ENCODE measurements at regions of chr7 and their contacts with region 1.

Region 1: GRCh38 chr7:122935620-122936019 is 49.4 kb upstream of the CADPS2 start:
- DNase-seq: no peak
- ATAC-seq: no peak
- H3K4me3 Mint-ChIP-seq: no peak overlapping the region
- H3K27ac Mint-ChIP-seq: no peak overlapping the region
- H3K4me1 Mint-ChIP-seq: no peaks in the 10 kb centered on the region
- H3K27me3 Mint-ChIP-seq: no peaks in the 10 kb centered on the region
- CTCF ChIP-seq: no peak

Region 2: DNA sequence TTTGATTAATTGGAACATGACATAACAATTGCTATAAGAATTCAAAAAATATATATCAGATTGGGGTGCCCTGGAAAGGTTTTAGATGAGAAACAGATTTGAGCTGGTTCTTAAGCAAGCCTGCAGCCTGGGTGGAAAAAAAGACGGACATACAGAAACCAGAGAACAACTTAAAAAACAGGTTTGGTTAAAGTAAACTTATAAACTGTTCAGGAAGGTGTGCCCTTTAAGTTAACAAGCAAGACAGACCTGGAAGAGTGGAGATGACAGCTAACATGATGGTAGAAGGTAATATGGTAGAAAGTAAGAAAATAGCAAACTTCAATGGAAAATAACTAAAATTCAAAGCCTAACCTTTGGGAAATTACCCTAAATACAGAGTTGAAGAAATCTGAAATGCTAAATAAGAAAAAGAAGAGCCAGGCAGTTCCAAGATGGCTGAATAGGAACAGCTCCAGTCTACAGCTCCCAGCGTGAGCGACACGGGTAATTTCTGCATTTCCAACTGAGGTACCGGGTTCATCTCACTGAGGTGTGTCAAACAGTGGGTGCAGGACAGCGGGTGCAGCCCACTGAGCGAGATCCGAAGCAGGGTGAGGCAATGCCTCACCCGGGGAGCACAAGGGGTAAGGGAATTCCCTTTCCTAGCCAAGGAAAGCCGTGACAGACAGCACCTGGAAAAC is 101.6 kb before region 1 on chr7:
- CTCF ChIA-PET with region 1: no interaction called
- POLR2A ChIA-PET with region 1: no interaction called
- intact Hi-C with region 1: no loop called
- DNase-seq: no peak
- ATAC-seq: no peak
- H3K4me3 Mint-ChIP-seq: no peak overlapping the region
- H3K27ac Mint-ChIP-seq: no peak overlapping the region
- H3K4me1 Mint-ChIP-seq: no peaks in the 10 kb centered on the region
- H3K27me3 Mint-ChIP-seq: no peaks in the 10 kb centered on the region
- CTCF ChIP-seq: no peak

Region 3: DNA sequence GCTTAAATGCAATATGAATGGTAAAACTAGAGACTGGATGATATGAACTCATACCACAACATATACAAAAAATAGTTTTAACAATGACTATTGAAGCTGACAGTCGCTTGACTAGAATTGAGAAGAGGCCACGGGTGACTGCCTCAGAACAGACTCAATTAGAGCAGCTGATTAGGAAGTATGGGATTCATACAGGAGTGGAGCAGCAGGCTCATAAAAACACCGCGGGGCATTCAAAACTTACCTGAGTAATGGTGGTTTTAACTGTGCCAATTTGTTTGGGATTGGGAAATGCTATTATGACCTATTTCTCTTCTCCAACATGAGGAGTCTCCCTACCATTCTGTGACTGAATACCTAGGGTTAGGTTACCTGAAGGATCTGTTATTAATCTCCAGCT is 51.4 kb before region 1 on chr7:
- CTCF ChIA-PET with region 1: no interaction called
- POLR2A ChIA-PET with region 1: no interaction called
- intact Hi-C with region 1: loop called (anchors 10 kb)
- DNase-seq: no peak
- ATAC-seq: no peak
- H3K4me3 Mint-ChIP-seq: no peak overlapping the region
- H3K27ac Mint-ChIP-seq: no peak overlapping the region
- H3K4me1 Mint-ChIP-seq: peaks cover 12% of the 10 kb centered on the region
- H3K27me3 Mint-ChIP-seq: peaks cover 41% of the 10 kb centered on the region
- CTCF ChIP-seq: no peak

Region 4: GRCh38 chr7:123242467-123243092 is 307.0 kb after region 1 on chr7:
- CTCF ChIA-PET with region 1: no interaction called
- POLR2A ChIA-PET with region 1: no interaction called
- intact Hi-C with region 1: no loop called
- DNase-seq: no peak
- ATAC-seq: no peak
- H3K4me3 Mint-ChIP-seq: no peak overlapping the region
- H3K27ac Mint-ChIP-seq: no peak overlapping the region
- H3K4me1 Mint-ChIP-seq: no peaks in the 10 kb centered on the region
- H3K27me3 Mint-ChIP-seq: no peaks in the 10 kb centered on the region
- CTCF ChIP-seq: no peak

Measured in activated B cell treated with CpG ODN at 0.5 μM for 24 hours (primary cell).